ENCODE measurements at regions of chr1 and their contacts with region 1.

Region 1: DNA sequence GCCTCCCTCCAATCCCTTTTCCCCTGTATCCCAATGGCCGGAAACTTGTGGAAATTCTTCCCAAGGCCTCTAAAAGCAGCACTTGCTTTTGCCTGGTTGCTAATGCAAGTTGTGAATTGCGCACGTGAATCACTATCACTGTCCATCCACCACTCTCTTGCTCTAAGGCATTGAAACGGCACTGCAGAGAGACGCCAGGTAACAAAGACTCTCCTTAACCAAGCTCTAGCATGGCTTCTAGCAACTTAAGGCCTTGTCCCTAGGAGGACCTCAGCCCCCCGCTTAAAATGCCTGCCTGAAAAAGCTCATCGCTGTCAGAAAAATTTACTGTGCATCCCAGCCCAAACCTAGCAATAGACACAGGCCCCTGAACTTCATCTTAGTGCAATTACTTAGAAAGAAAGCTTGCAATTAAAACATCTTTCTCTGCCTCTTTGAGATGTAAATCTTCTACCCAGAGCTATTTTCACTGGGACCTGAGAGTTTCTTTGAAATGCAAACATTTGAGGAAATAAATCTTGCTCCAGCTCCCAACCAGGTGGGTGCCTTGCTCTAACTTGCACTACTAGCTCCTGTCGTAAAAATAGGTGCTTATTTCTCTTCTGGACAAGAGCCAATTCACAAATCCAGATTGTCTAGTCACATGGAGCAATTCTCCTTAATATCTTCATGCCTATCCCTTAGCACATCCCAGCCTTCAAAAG is 32.9 kb upstream of the ITLN2 start:
- DNase-seq: no peak
- ATAC-seq: no peak
- H3K4me3 ChIP-seq: no peak overlapping the region
- H3K27ac ChIP-seq: no peak overlapping the region
- H3K4me1 ChIP-seq: no peaks in the 10 kb centered on the region; the same call in 1 of the 2 replicates
- H3K27me3 ChIP-seq: no peaks in the 10 kb centered on the region
- CTCF ChIP-seq: no peak
- EP300 ChIP-seq: no peak
- POLR2A ChIP-seq: no peak
- RAD21 ChIP-seq: no peak

Region 2: DNA sequence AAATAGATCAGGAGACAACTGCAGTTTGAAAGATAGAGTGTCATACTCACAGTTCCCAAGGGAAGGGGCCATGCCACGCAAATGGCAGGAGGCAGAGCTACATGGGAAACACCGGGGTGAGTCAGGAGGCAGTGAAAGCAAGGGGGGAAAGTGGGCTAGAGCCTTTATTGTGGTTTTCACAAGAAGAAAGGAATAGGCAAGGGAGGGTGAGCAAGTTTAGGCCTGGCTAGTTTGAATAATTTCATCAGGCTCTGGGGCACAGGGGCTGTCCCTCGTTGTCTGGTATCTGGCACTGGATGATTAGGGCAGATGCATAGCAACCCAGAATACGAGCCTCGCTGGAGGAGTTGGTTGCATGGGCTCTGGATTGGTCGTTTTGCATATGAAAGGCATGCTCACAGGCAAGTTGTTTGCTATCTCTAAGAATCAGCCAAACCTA is 15.9 kb before region 1 on chr1:
- CTCF ChIA-PET with region 1: interaction called, 75 read pairs
- POLR2A ChIA-PET with region 1: no interaction called
- RAD21 ChIA-PET with region 1: interaction called, 21 read pairs
- SMC1A ChIA-PET with region 1: interaction called, 4 read pairs
- in situ Hi-C with region 1: no loop called
- intact Hi-C with region 1: no loop called
- DNase-seq: peak; percentile 70
- ATAC-seq: peak; percentile 93
- H3K4me3 ChIP-seq: no peak overlapping the region
- H3K27ac ChIP-seq: no peak overlapping the region
- H3K4me1 ChIP-seq: peaks cover 14% of the 10 kb centered on the region
- H3K27me3 ChIP-seq: no peaks in the 10 kb centered on the region
- CTCF ChIP-seq: no peak
- EP300 ChIP-seq: peak; percentile 11 to 56; a peak in 1 of 4 replicates
- POLR2A ChIP-seq: no peak
- RAD21 ChIP-seq: no peak

Region 3: GRCh38 chr1:161229896-161230295 is 242.4 kb after region 1 on chr1:
- CTCF ChIA-PET with region 1: no interaction called
- POLR2A ChIA-PET with region 1: no interaction called
- RAD21 ChIA-PET with region 1: no interaction called
- SMC1A ChIA-PET with region 1: no interaction called
- in situ Hi-C with region 1: no loop called
- intact Hi-C with region 1: no loop called
- DNase-seq: no peak
- ATAC-seq: no peak
- H3K4me3 ChIP-seq: no peak overlapping the region
- H3K27ac ChIP-seq: no peak overlapping the region
- H3K4me1 ChIP-seq: peaks cover 18% of the 10 kb centered on the region
- H3K27me3 ChIP-seq: no peaks in the 10 kb centered on the region
- CTCF ChIP-seq: peak in 1 of 3 experiments; percentile 13; a peak in 1 of 6 replicates
- EP300 ChIP-seq: no peak
- POLR2A ChIP-seq: no peak
- RAD21 ChIP-seq: 0 out of 2 replicates have a peak, but pooled peaks have one; percentile 3